Activated naive CD4-positive, alpha-beta T cell treated with anti-CD3 and anti-CD28 coated beads for 36 hours (primary cell): ENCODE measurements at regions of chr6 and their contacts with region 1.

Region 1: GRCh38 chr6:90266905-90267621 is 29.6 kb downstream of the BACH2 start:
- DNase-seq: peak; percentile 78
- H3K4me3 Mint-ChIP-seq: peak overlapping the region; percentile 45
- H3K27ac Mint-ChIP-seq: peak overlapping the region; percentile 96
- H3K4me1 Mint-ChIP-seq: peaks cover 92% of the 10 kb centered on the region
- H3K27me3 Mint-ChIP-seq: no peaks in the 10 kb centered on the region

Region 2: GRCh38 chr6:90190752-90191395 is 76.2 kb before region 1 on chr6:
- CTCF ChIA-PET with region 1: no interaction called
- intact Hi-C with region 1: loop called (anchors 1 kb)
- DNase-seq: peak; percentile 39
- H3K4me3 Mint-ChIP-seq: peak overlapping the region; percentile 2
- H3K27ac Mint-ChIP-seq: peak overlapping the region; percentile 69
- H3K4me1 Mint-ChIP-seq: peaks cover 90% of the 10 kb centered on the region
- H3K27me3 Mint-ChIP-seq: no peaks in the 10 kb centered on the region

Region 3: GRCh38 chr6:90216072-90216977 is 50.7 kb before region 1 on chr6:
- CTCF ChIA-PET with region 1: interaction called, 5 read pairs
- intact Hi-C with region 1: loop called (anchors 1 kb)
- DNase-seq: peak; percentile 76
- H3K4me3 Mint-ChIP-seq: peak overlapping the region; percentile 14
- H3K27ac Mint-ChIP-seq: no peak overlapping the region
- H3K4me1 Mint-ChIP-seq: peaks cover 32% of the 10 kb centered on the region
- H3K27me3 Mint-ChIP-seq: no peaks in the 10 kb centered on the region

Region 4: GRCh38 chr6:90256698-90257485 is 10.2 kb before region 1 on chr6:
- CTCF ChIA-PET with region 1: interaction called, 8 read pairs
- intact Hi-C with region 1: loop called (anchors 1 kb)
- DNase-seq: peak; percentile 46
- H3K4me3 Mint-ChIP-seq: no peak overlapping the region
- H3K27ac Mint-ChIP-seq: peak overlapping the region; percentile 78
- H3K4me1 Mint-ChIP-seq: peaks cover 94% of the 10 kb centered on the region
- H3K27me3 Mint-ChIP-seq: no peaks in the 10 kb centered on the region